Activated CD4-positive, alpha-beta T cell treated with anti-CD3 and anti-CD28 coated beads, Interleukin-2, amount 10 ng/mL, durations not matched to agents 7 days and 5 days (primary cell): ENCODE measurements at regions of chr5 and their contacts with region 1.

Region 1: DNA sequence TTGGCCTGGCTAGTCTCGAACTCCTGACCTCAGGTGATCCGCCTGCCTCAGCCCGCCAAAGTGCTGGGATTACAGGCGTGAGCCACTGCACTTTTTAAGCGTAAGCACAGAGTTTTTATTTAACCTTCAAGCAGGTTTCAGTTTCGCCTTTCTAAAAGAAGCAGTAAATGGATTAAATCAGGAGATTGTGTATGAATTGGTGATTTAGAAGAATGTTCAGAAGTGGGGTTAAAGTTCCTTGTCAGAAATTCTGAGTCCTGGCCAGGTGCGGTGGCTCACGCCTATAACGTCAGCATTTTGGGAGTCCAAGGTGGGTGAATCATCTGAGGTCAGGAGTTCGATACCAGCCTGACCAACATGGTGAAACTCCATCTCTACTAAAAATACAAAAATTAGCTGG is 12.2 kb downstream of the HSPA4 start:
- DNase-seq: no peak
- H3K4me3 Mint-ChIP-seq: no peak overlapping the region
- H3K27ac Mint-ChIP-seq: no peak overlapping the region
- H3K4me1 Mint-ChIP-seq: peaks cover 28% of the 10 kb centered on the region
- H3K27me3 Mint-ChIP-seq: no peaks in the 10 kb centered on the region

Region 2: GRCh38 chr5:132653716-132654115 is 410.2 kb before region 1 on chr5:
- CTCF ChIA-PET with region 1: no interaction called
- POLR2A ChIA-PET with region 1: no interaction called
- DNase-seq: no peak
- H3K4me3 Mint-ChIP-seq: no peak overlapping the region
- H3K27ac Mint-ChIP-seq: no peak overlapping the region
- H3K4me1 Mint-ChIP-seq: peaks cover 11% of the 10 kb centered on the region
- H3K27me3 Mint-ChIP-seq: peaks cover 27% of the 10 kb centered on the region

Region 3: GRCh38 chr5:133079048-133079447 is 15.1 kb after region 1 on chr5:
- CTCF ChIA-PET with region 1: interaction called, 12 read pairs
- POLR2A ChIA-PET with region 1: interaction called, 3 read pairs
- DNase-seq: no peak
- H3K4me3 Mint-ChIP-seq: no peak overlapping the region
- H3K27ac Mint-ChIP-seq: no peak overlapping the region
- H3K4me1 Mint-ChIP-seq: peaks cover 21% of the 10 kb centered on the region
- H3K27me3 Mint-ChIP-seq: no peaks in the 10 kb centered on the region